Naive thymus-derived CD4-positive, alpha-beta T cell (primary cell): ENCODE measurements at regions of chr12 and their contacts with region 1.

Region 1: DNA sequence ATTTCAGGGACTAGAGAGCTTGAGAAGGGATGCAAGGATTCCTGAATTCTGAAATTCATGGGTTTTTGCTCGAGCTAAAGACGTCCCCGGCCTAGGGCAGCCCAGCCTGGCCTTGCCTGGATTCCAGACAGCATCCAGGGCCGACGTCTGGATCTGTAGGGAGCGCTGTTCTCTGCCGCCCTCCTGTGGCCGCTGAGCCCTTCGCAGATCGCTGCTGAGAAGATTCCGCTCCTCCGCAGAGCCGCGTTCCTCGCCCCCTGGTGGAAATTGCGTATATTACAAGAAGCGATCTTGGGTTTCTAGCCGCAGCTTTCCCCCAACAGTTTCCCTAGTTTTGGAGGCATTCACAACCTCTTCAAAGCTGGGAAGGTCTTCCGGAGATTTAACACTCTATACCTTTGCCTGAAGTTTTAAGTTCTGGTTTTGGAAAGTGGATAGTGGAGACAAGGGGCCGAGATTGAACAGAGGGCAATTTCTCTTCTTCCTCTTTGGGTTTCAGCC is 5.1 kb downstream of the CISTR start:
- DNase-seq: peak; percentile 71 to 89 (median 84)
- ATAC-seq: peak; percentile 95
- H3K4me3 ChIP-seq: no peak overlapping the region
- H3K4me3 Mint-ChIP-seq: peak overlapping the region in 8 of 10 donors; percentile 52 to 78 (median 66)
- H3K27ac ChIP-seq: no peak overlapping the region
- H3K27ac Mint-ChIP-seq: no peak overlapping the region
- H3K4me1 ChIP-seq: peaks cover 9 to 20% of the 10 kb centered on the region in 2 donors
- H3K4me1 Mint-ChIP-seq: peaks cover 3 to 26% (median 7%) of the 10 kb centered on the region in 7 donors
- H3K27me3 ChIP-seq: no peaks in the 10 kb centered on the region
- H3K27me3 Mint-ChIP-seq: peaks cover 31 to 47% (median 35%) of the 10 kb centered on the region in 5 donors

Region 2: GRCh38 chr12:53065975-53066931 is 680.4 kb before region 1 on chr12:
- CTCF ChIA-PET with region 1: no interaction called
- POLR2A ChIA-PET with region 1: no interaction called
- intact Hi-C with region 1: no loop called
- DNase-seq: peak; percentile 36 to 72 (median 51)
- ATAC-seq: peak; percentile 80
- H3K4me3 ChIP-seq: no peak overlapping the region
- H3K4me3 Mint-ChIP-seq: no peak overlapping the region
- H3K27ac ChIP-seq: no peak overlapping the region
- H3K27ac Mint-ChIP-seq: peak overlapping the region in 4 of 9 donors; percentile 26 to 74 (median 50)
- H3K4me1 ChIP-seq: peaks cover 0 to 3% of the 10 kb centered on the region in 2 donors
- H3K4me1 Mint-ChIP-seq: peaks cover 0 to 21% (median 11%) of the 10 kb centered on the region in 7 donors
- H3K27me3 ChIP-seq: no peaks in the 10 kb centered on the region
- H3K27me3 Mint-ChIP-seq: no peaks in the 10 kb centered on the region

Region 3: DNA sequence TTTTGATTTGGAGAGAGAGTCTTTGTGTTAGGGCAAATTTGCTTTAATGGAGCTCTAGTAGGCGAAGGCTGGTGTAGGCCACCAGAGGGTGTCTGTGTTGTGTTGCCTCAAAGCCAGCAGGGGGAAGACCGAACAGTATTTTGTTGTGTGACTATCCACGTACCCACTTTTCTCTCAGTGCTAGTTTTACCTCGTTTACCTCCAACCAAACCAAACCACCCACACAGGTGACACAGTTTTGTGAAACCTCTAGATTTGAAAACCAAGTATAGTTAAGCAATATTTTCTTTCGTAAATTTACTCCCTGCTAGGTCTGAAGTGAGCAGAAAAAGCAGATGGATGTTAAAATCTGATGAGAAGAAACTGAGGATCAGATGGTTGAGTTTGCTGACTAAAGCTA is 203.1 kb before region 1 on chr12:
- CTCF ChIA-PET with region 1: interaction called, 10 read pairs
- POLR2A ChIA-PET with region 1: interaction called, 3 read pairs
- intact Hi-C with region 1: loop called (anchors 1 to 2 kb)
- DNase-seq: peak in 8 of 9 donors; percentile 37 to 78 (median 64)
- ATAC-seq: peak; percentile 94
- H3K4me3 ChIP-seq: no peak overlapping the region
- H3K4me3 Mint-ChIP-seq: peak overlapping the region in 5 of 10 donors; percentile 5 to 52 (median 33)
- H3K27ac ChIP-seq: peak overlapping the region; percentile 26
- H3K27ac Mint-ChIP-seq: peak overlapping the region; percentile 51 to 88 (median 76)
- H3K4me1 ChIP-seq: peaks cover 0 to 7% of the 10 kb centered on the region in 2 donors
- H3K4me1 Mint-ChIP-seq: peaks cover 0 to 25% (median 18%) of the 10 kb centered on the region in 7 donors
- H3K27me3 ChIP-seq: no peaks in the 10 kb centered on the region
- H3K27me3 Mint-ChIP-seq: no peaks in the 10 kb centered on the region

Region 4: GRCh38 chr12:53675651-53676453 is 70.8 kb before region 1 on chr12 and contains the start of gene ATP5MC2:
- CTCF ChIA-PET with region 1: interaction called, 13 read pairs
- POLR2A ChIA-PET with region 1: no interaction called
- intact Hi-C with region 1: loop called in 1 of 2 experiments (anchors 1 kb)
- DNase-seq: peak; percentile 92 to 98 (median 97)
- ATAC-seq: peak; percentile 97
- H3K4me3 ChIP-seq: peak within 1 kb of the TSS; percentile 64
- H3K4me3 Mint-ChIP-seq: peak within 1 kb of the TSS; percentile 91 to 99 (median 94)
- H3K27ac ChIP-seq: peak within 1 kb of the TSS; percentile 76
- H3K27ac Mint-ChIP-seq: peak within 1 kb of the TSS; percentile 91 to 98 (median 95)
- H3K4me1 ChIP-seq: peaks cover 7 to 21% of the 10 kb centered on the region in 2 donors
- H3K4me1 Mint-ChIP-seq: peaks cover 21 to 38% (median 32%) of the 10 kb centered on the region in 7 donors
- H3K27me3 ChIP-seq: no peaks in the 10 kb centered on the region
- H3K27me3 Mint-ChIP-seq: peaks cover 16 to 35% (median 21%) of the 10 kb centered on the region in 5 donors
- total RNA-seq, gene ATP5MC2: 237 to 332 (median 275) TPM

Region 5: DNA sequence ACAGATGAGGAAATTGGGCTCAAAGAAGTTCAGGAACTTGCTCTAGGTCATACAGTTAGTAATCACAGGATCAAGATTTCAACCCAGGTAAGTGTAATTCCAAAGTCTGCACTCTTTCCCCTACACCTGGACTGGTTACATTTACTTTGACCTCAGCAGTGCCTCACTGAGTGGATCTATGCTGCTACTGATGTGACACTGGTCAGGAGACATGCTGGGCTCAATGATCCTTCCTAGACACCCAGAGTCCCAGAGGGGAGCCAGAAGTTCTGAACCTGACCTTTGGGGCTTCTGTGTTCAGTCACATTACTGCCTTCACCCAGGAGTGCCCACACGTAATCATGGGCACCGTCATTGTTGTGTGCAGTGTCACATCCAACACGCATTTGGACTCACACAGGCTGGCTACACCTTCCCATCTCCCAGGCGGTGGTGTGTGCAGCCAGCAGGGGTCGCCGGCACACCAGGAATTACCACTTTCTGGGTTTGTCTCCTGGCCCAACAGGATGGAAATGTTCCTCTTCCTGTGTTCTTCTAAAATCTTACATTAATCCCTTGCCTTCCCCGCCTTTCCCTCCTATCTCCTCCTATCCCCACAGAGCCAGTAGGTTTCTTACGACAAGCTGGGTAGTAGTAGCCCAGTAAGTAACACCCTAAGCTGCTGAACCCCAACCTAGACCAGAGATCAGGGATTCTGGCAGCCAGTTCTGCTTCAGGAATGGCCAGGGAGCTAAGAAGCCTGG is 45.0 kb before region 1 on chr12:
- CTCF ChIA-PET with region 1: interaction called, 143 read pairs
- POLR2A ChIA-PET with region 1: interaction called, 8 read pairs
- intact Hi-C with region 1: loop called (anchors 1 kb)
- DNase-seq: peak; percentile 48 to 74 (median 70)
- ATAC-seq: peak; percentile 92
- H3K4me3 ChIP-seq: no peak overlapping the region
- H3K4me3 Mint-ChIP-seq: no peak overlapping the region
- H3K27ac ChIP-seq: no peak overlapping the region
- H3K27ac Mint-ChIP-seq: no peak overlapping the region
- H3K4me1 ChIP-seq: peaks cover 0 to 4% of the 10 kb centered on the region in 2 donors
- H3K4me1 Mint-ChIP-seq: peaks cover 5 to 10% (median 7%) of the 10 kb centered on the region in 7 donors
- H3K27me3 ChIP-seq: peaks cover 11 to 12% of the 10 kb centered on the region in 2 donors
- H3K27me3 Mint-ChIP-seq: peaks cover 76 to 90% (median 82%) of the 10 kb centered on the region in 5 donors

Region 6: GRCh38 chr12:53717319-53717718 is 29.3 kb before region 1 on chr12:
- CTCF ChIA-PET with region 1: interaction called, 10 read pairs
- POLR2A ChIA-PET with region 1: no interaction called
- intact Hi-C with region 1: no loop called
- DNase-seq: no peak
- ATAC-seq: no peak
- H3K4me3 ChIP-seq: no peak overlapping the region
- H3K4me3 Mint-ChIP-seq: no peak overlapping the region
- H3K27ac ChIP-seq: no peak overlapping the region
- H3K27ac Mint-ChIP-seq: no peak overlapping the region
- H3K4me1 ChIP-seq: no peaks in the 10 kb centered on the region
- H3K4me1 Mint-ChIP-seq: no peaks in the 10 kb centered on the region
- H3K27me3 ChIP-seq: no peaks in the 10 kb centered on the region
- H3K27me3 Mint-ChIP-seq: no peaks in the 10 kb centered on the region

Region 7: GRCh38 chr12:53733051-53733806 is 13.4 kb before region 1 on chr12:
- CTCF ChIA-PET with region 1: interaction called, 104 read pairs
- POLR2A ChIA-PET with region 1: interaction called, 13 read pairs
- intact Hi-C with region 1: no loop called
- DNase-seq: no peak
- ATAC-seq: no peak
- H3K4me3 ChIP-seq: no peak overlapping the region
- H3K4me3 Mint-ChIP-seq: peak overlapping the region in 1 of 10 donors; percentile 37
- H3K27ac ChIP-seq: no peak overlapping the region
- H3K27ac Mint-ChIP-seq: peak overlapping the region in 1 of 9 donors; percentile 12
- H3K4me1 ChIP-seq: peaks cover 1 to 5% of the 10 kb centered on the region in 2 donors
- H3K4me1 Mint-ChIP-seq: peaks cover 7 to 25% (median 21%) of the 10 kb centered on the region in 7 donors
- H3K27me3 ChIP-seq: no peaks in the 10 kb centered on the region
- H3K27me3 Mint-ChIP-seq: peaks cover 0 to 46% (median 15%) of the 10 kb centered on the region in 5 donors

Region 8: GRCh38 chr12:53775478-53776145 is 29.0 kb after region 1 on chr12:
- CTCF ChIA-PET with region 1: no interaction called
- POLR2A ChIA-PET with region 1: no interaction called
- intact Hi-C with region 1: no loop called
- DNase-seq: no peak
- ATAC-seq: no peak
- H3K4me3 ChIP-seq: no peak overlapping the region
- H3K4me3 Mint-ChIP-seq: no peak overlapping the region
- H3K27ac ChIP-seq: no peak overlapping the region
- H3K27ac Mint-ChIP-seq: no peak overlapping the region
- H3K4me1 ChIP-seq: no peaks in the 10 kb centered on the region
- H3K4me1 Mint-ChIP-seq: no peaks in the 10 kb centered on the region
- H3K27me3 ChIP-seq: peaks cover 0 to under 1% of the 10 kb centered on the region in 2 donors
- H3K27me3 Mint-ChIP-seq: peaks cover 30 to 56% (median 51%) of the 10 kb centered on the region in 5 donors

Region 9: DNA sequence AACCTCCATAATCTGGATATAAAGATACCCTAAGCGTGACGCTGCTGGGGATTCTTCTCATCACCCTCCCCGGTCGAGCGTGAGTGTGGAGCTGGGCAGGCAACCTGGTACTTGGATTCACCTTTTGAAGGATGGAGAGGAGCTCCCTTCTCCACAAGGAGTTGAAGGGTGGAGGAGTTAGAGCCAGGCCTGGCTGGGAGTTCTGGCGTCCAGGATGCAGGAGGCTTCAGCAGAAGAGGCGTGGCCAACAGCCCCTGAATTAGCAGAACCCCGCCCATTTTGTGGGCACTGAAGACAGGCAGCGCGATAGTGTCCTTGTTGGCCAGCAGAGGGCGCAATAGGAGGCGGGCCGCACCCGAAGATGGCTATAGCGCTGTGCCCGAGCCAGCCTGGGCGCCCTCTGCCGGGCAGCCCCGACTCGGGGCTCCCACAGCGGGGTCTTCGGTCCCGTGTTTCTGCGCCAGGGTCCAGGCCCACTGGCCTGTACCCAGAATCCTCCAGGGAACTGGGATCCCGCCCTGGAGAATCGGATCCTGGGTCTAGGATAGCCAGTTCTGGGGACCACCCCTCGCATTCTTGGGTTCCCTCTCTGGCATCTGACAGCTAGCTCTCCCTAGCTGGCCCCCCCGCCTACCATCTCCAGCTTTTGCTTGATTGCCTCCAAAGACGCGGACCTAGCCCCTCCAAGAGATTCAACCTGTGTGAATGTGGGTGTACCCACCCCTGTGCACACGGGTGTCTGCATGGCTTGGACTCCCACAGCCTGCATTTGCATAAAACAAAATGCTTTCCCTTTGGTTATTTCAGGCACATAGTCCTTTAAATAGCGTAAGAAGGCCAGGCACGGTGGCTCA is 468.1 kb after region 1 on chr12:
- CTCF ChIA-PET with region 1: interaction called, 7 read pairs
- POLR2A ChIA-PET with region 1: no interaction called
- intact Hi-C with region 1: loop called in 1 of 2 experiments (anchors 5 kb)
- DNase-seq: peak; percentile 80 to 90 (median 89)
- ATAC-seq: peak; percentile 95
- H3K4me3 ChIP-seq: peak overlapping the region; percentile 56
- H3K4me3 Mint-ChIP-seq: peak overlapping the region; percentile 72 to 93 (median 82)
- H3K27ac ChIP-seq: no peak overlapping the region
- H3K27ac Mint-ChIP-seq: peak overlapping the region in 2 of 9 donors; percentile 28 to 52
- H3K4me1 ChIP-seq: peaks cover 25 to 35% of the 10 kb centered on the region in 2 donors
- H3K4me1 Mint-ChIP-seq: peaks cover 18 to 52% (median 31%) of the 10 kb centered on the region in 7 donors
- H3K27me3 ChIP-seq: no peaks in the 10 kb centered on the region
- H3K27me3 Mint-ChIP-seq: peaks cover 0 to 40% (median 5%) of the 10 kb centered on the region in 5 donors